ENCODE measurements at regions of chr7 and their contacts with region 1.

Region 1: DNA sequence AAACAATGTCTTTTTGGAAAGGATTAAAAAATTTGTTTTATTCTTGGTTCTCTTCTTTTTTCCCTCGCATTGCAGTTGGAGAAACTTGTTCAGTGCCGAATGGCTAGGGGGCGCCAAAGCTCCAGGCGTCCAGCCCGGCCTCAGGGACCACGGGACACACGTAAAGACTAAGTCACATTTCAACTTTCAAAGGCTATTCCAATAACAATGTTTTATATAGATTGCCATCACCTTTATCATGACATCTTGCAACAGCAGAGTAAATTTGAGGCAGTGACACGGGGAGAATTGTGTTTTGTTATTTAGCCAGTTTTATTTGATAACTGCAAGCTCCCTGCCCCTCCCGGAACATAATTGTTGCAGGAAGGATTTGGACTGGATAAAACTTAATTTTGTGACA is 2.2 kb upstream of the IGFBP3 start:
- DNase-seq: peak; percentile 23
- ATAC-seq: peak; percentile 72
- H3K4me3 ChIP-seq: no peak overlapping the region
- H3K27ac ChIP-seq: no peak overlapping the region
- H3K4me1 ChIP-seq: peaks cover 20% of the 10 kb centered on the region; the same call in 1 of the 2 replicates
- H3K27me3 ChIP-seq: peaks cover 7 to 48% of the 10 kb centered on the region in 2 experiments; a peak in 4 of 5 replicates
- CTCF ChIP-seq: peak; percentile 86
- EP300 ChIP-seq: no peak
- POLR2A ChIP-seq: no peak
- RAD21 ChIP-seq: peak; percentile 73

Region 2: DNA sequence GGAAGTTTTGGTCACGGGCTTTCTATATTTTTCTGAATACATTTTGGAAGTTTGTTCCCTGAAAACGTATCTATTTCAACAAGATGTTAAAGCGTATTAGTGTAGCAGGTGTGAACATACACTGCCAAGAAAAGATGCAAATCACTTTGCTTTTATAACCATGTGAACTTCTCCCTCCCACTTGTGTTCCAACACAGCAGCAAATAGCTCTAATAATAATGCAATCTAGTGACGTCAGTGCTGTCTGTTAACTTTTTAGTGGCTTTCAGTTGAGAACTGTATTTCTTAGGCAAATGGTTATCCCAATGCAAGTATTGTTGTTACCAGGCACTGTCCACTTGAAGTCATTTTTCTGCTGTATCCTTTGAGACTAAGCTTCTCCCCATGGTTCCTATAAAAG is 186.1 kb after region 1 on chr7:
- CTCF ChIA-PET with region 1: no interaction called
- POLR2A ChIA-PET with region 1: no interaction called
- in situ Hi-C with region 1: loop called (anchors 25 kb)
- intact Hi-C with region 1: loop called (anchors 2 kb)
- DNase-seq: no peak
- ATAC-seq: no peak
- H3K4me3 ChIP-seq: no peak overlapping the region
- H3K27ac ChIP-seq: no peak overlapping the region
- H3K4me1 ChIP-seq: no peaks in the 10 kb centered on the region
- H3K27me3 ChIP-seq: peaks cover 0 to 8% of the 10 kb centered on the region in 2 experiments; a peak in 3 of 5 replicates
- CTCF ChIP-seq: no peak
- EP300 ChIP-seq: no peak
- POLR2A ChIP-seq: no peak
- RAD21 ChIP-seq: no peak

Region 3: GRCh38 chr7:46131916-46132795 is 208.9 kb after region 1 on chr7:
- CTCF ChIA-PET with region 1: no interaction called
- POLR2A ChIA-PET with region 1: no interaction called
- in situ Hi-C with region 1: no loop called
- intact Hi-C with region 1: loop called (anchors 2 kb)
- DNase-seq: peak; percentile 43
- ATAC-seq: peak; percentile 98
- H3K4me3 ChIP-seq: no peak overlapping the region
- H3K27ac ChIP-seq: no peak overlapping the region
- H3K4me1 ChIP-seq: peaks cover 7% of the 10 kb centered on the region; the same call in 1 of the 2 replicates
- H3K27me3 ChIP-seq: no peaks in the 10 kb centered on the region; a peak in 1 of 5 replicates
- CTCF ChIP-seq: peak; percentile 60
- EP300 ChIP-seq: no peak
- POLR2A ChIP-seq: no peak
- RAD21 ChIP-seq: 0 out of 2 replicates have a peak, but pooled peaks have one; percentile 25

Region 4: DNA sequence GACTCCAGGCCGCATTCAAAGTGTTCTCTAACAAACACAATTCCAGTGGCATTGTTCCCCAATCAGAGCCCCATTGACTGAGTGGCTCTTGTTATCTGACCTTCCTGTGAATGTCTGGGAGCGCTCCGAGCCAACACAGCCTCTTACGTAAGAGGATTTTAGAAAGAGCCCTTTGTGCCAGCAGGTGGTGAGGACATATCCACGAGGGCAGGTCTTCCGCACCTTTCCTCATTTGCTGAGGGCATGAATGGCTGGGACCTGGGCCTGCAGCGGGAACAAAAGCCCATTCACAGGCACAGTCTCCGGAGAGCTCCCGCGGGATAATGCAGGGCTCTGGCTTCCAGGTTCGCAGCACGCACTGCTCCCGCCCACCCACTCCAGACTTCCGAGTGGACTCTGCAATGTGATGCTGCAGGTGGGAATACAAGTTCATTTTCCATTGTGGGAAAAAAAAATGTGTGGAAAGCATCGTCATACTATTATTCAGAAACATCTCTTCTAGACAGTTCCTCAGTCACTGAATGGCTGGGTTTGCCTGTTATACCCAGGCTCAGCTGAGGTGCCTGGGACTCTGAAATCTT is 292.8 kb after region 1 on chr7:
- CTCF ChIA-PET with region 1: no interaction called
- POLR2A ChIA-PET with region 1: no interaction called
- in situ Hi-C with region 1: no loop called
- intact Hi-C with region 1: loop called (anchors 10 kb)
- DNase-seq: peak; percentile 97
- ATAC-seq: peak; percentile 98
- H3K4me3 ChIP-seq: 0 out of 6 replicates have a peak overlapping the region, but pooled peaks of 1 of the 3 experiments have one; percentile 20
- H3K27ac ChIP-seq: peak overlapping the region; percentile 57
- H3K4me1 ChIP-seq: peaks cover 23% of the 10 kb centered on the region
- H3K27me3 ChIP-seq: peaks cover 0 to 18% of the 10 kb centered on the region in 2 experiments; a peak in 1 of 5 replicates
- CTCF ChIP-seq: peak; percentile 21; the same call in 1 of the 2 replicates
- EP300 ChIP-seq: peak; percentile 29 to 79; a peak in 2 of 4 replicates
- POLR2A ChIP-seq: no peak
- RAD21 ChIP-seq: no peak

Region 5: DNA sequence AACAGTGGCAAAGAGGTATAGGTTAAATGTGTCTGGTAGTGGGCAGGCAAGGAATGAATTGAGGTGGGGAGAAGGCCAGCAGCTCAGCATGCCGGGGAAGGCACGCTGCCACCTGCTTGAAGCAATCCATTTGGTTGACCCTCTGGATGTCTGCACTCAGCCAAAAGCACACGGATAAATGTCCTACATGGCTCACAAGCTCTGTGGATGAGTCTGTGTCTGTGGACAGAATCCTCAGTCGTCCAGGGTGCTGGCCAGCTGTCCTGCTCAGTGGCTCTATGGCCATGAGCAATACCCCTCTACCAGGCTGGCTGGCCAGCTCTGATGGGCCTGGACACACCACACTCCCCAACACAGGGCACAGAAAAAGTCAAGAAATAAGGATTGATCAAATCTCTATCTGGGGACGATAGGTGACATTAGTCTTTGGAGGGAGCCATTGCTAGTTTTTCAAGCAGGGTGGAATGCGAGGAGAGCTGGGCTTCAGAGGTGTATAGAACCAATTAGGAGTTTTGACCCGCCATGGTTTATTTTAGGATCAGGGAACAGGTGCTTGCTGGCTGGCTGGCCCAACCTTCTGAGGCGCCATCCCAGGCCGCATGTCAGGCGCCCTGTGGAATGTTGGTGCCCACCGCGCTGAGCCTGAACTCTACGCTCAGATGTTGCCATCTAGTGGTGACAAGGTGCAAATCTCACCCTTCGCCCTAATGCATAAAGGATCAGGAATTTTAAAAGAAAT is 1165.2 kb after region 1 on chr7:
- CTCF ChIA-PET with region 1: interaction called, 13 read pairs
- POLR2A ChIA-PET with region 1: no interaction called
- in situ Hi-C with region 1: loop called (anchors 5 kb)
- intact Hi-C with region 1: loop called (anchors 2 kb)
- DNase-seq: peak; percentile 46
- ATAC-seq: peak; percentile 99
- H3K4me3 ChIP-seq: no peak overlapping the region
- H3K27ac ChIP-seq: no peak overlapping the region
- H3K4me1 ChIP-seq: no peaks in the 10 kb centered on the region
- H3K27me3 ChIP-seq: 0 out of 5 replicates have a peak, but pooled peaks cover 0 to 7% of the 10 kb centered on the region in 2 experiments
- CTCF ChIP-seq: peak; percentile 87
- EP300 ChIP-seq: no peak
- POLR2A ChIP-seq: no peak
- RAD21 ChIP-seq: peak; percentile 79